ENCODE measurements at regions of chr3 and their contacts with region 1.

Region 1: GRCh38 chr3:45688882-45689756 is at the start of gene SACM1L:
- DNase-seq: peak; percentile 99
- ATAC-seq: peak; percentile 85
- H3K4me3 ChIP-seq: peak within 1 kb of the TSS; percentile 69 to 96 (median 82)
- H3K4me3 Mint-ChIP-seq: peak within 1 kb of the TSS; percentile 93
- H3K27ac ChIP-seq: peak within 1 kb of the TSS; percentile 75 to 85
- H3K27ac Mint-ChIP-seq: peak within 1 kb of the TSS; percentile 99
- H3K4me1 ChIP-seq: peaks cover 38 to 44% of the 10 kb centered on the region in 2 donors
- H3K4me1 Mint-ChIP-seq: peaks cover 55% of the 10 kb centered on the region
- H3K27me3 ChIP-seq: no peaks in the 10 kb centered on the region
- H3K27me3 Mint-ChIP-seq: peaks cover 3% of the 10 kb centered on the region
- CTCF ChIP-seq: no peak
- total RNA-seq, gene SACM1L: 85.7 and 88.2 TPM in 2 replicates

Region 2: DNA sequence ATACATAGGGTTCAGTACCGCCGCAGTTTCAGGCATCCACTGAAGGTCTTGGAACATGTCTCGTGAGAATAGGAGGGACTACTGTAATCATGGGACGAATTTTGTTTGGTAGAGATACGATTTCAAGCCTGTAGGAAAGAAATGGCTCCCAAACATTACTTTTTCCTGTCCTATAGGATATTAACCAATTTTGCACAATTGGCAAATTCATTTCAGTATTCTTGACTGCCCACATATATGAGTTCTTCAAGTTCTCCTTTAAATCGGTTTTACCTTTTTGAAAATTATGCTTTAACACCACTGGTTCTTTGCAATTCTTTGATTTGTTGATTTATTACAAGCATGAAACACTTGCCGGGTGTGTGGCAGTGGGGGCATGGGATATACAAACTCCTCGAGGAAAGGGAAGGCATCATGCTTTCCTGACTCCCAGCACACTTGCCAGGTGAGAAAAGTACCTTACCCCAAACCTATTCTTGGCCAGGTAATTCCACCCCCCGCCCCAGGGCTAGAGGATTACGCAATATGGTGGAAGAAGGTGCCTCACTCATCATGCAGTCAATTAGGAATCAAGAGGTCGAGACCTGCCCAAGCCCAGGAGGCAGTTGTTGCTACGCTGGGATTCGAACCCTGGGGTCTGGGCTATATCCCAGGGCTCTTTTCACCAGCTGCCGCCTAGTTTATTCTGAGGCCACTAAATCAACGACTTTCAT is 301.3 kb before region 1 on chr3:
- CTCF ChIA-PET with region 1: no interaction called
- POLR2A ChIA-PET with region 1: no interaction called
- intact Hi-C with region 1: loop called (anchors 1 kb)
- DNase-seq: peak; percentile 8
- ATAC-seq: peak; percentile 4
- H3K4me3 ChIP-seq: peak overlapping the region; percentile 26 to 97 (median 88)
- H3K4me3 Mint-ChIP-seq: peak overlapping the region; percentile 98
- H3K27ac ChIP-seq: peak overlapping the region in 1 of 2 donors; percentile 68
- H3K27ac Mint-ChIP-seq: peak overlapping the region; percentile 96
- H3K4me1 ChIP-seq: peaks cover 13 to 15% of the 10 kb centered on the region in 2 donors
- H3K4me1 Mint-ChIP-seq: peaks cover 19% of the 10 kb centered on the region
- H3K27me3 ChIP-seq: no peaks in the 10 kb centered on the region
- H3K27me3 Mint-ChIP-seq: peaks cover 20% of the 10 kb centered on the region
- CTCF ChIP-seq: no peak

Region 3: DNA sequence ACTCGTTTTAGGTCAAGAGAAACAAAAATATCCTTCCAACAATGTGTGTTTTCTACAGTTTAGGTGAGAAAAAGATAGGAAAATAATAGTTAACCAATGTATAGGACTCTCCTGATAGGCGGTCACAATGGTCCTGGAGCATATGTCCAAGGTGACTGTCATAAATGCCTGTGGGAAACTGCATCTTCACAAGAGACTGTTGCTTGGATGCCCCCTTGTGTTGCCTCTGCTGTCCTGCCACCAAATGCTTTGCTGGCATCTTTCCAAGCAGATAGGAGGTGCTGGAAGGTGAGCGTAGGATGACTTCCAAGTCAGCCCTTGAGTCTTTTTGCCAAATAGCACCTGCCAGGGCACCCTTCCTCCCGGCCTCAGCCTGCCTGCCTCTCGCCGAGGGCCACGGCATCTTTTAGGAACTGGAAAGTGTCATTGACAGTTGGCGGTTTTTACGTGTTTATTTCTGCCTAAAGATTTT is 24.0 kb before region 1 on chr3:
- CTCF ChIA-PET with region 1: interaction called, 10 read pairs
- POLR2A ChIA-PET with region 1: no interaction called
- intact Hi-C with region 1: loop called (anchors 2 kb)
- DNase-seq: peak; percentile 52
- ATAC-seq: peak; percentile 34
- H3K4me3 ChIP-seq: peak overlapping the region in 3 of 5 experiments; percentile 20 to 47 (median 26)
- H3K4me3 Mint-ChIP-seq: peak overlapping the region; percentile 68
- H3K27ac ChIP-seq: peak overlapping the region; percentile 36 to 72
- H3K27ac Mint-ChIP-seq: peak overlapping the region; percentile 66
- H3K4me1 ChIP-seq: peaks cover 12 to 18% of the 10 kb centered on the region in 2 donors
- H3K4me1 Mint-ChIP-seq: peaks cover 24% of the 10 kb centered on the region
- H3K27me3 ChIP-seq: no peaks in the 10 kb centered on the region
- H3K27me3 Mint-ChIP-seq: no peaks in the 10 kb centered on the region
- CTCF ChIP-seq: peak; percentile 33

Region 4: DNA sequence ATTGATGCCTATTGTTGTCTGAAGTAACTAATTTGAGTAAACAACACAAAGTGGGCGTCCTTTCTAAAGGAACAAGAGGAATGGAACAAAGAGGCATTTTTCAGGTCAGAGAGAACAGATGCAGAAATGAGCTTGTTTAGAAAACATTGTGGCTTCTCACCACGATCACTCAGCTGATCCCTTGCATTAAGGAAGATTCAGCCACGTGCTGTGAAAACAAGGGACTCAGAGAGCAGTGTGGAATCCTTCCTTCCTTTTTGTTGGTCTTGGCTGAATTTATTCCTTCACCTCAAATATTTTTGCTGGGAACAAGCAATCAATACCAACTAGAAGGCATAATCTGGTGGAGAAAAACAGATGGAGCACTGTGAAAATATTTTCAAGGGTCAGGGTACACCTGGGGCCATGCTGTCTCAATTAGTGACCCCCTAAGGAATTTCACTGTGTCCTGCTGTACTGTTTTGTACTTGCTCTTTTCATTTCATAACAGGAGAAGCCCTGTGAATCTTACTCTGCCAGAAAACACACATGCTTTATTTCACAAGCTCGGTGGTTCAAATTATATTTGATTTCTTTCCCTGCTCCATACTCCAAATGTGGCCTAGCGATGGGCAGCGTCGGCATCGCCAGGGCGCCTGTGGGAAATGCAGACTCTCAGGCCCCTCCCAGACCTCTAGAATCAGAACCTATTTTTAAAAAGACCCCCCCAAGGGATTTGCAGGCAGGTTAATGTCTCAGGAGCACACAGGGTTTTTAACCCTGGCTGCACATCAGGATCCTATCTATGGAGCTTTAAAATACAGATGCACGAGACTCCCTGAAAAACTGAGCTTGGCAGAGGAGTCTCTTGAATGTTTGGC is 118.8 kb after region 1 on chr3:
- CTCF ChIA-PET with region 1: no interaction called
- POLR2A ChIA-PET with region 1: no interaction called
- intact Hi-C with region 1: no loop called
- DNase-seq: no peak
- ATAC-seq: no peak
- H3K4me3 ChIP-seq: no peak overlapping the region
- H3K4me3 Mint-ChIP-seq: no peak overlapping the region
- H3K27ac ChIP-seq: no peak overlapping the region
- H3K27ac Mint-ChIP-seq: no peak overlapping the region
- H3K4me1 ChIP-seq: no peaks in the 10 kb centered on the region
- H3K4me1 Mint-ChIP-seq: no peaks in the 10 kb centered on the region
- H3K27me3 ChIP-seq: no peaks in the 10 kb centered on the region
- H3K27me3 Mint-ChIP-seq: no peaks in the 10 kb centered on the region
- CTCF ChIP-seq: no peak

Region 5: DNA sequence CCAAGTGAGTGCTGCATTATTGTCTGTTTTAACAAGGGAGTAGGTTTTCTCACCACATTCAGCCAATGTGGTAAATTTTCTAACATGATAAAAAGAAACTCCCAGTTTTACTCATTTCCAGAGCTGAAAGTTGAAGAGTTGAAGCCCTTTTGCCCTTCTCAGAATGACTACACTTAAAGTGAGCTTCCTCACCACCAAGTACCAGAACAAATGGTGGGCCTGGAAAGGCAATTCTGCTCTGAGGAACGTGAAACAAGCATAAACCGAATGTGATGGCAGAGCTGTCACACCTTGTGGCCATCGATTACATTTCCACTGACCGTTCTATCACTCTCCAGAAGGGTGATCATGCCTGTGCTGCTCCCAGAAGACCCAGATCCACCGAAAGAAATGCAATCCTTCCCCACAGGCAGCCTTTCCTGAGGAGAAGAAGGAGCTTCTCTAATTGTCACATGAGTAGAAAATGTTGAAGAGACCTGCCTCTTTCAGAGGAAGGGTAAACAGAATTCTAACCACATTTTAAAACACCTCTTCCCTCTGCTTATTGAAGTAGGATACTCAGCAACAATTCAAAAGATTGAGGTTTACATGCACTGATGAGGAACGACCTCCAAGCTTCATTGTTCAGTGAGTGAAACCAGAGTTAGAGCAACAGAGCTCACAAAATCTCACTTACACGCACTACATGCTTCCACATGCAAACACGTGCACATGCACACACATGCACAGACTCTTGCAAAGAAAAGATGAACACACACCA is 175.8 kb after region 1 on chr3:
- CTCF ChIA-PET with region 1: no interaction called
- POLR2A ChIA-PET with region 1: no interaction called
- intact Hi-C with region 1: no loop called
- DNase-seq: no peak
- ATAC-seq: no peak
- H3K4me3 ChIP-seq: no peak overlapping the region
- H3K4me3 Mint-ChIP-seq: peak overlapping the region; percentile 52
- H3K27ac ChIP-seq: peak overlapping the region in 1 of 2 donors; percentile 14
- H3K27ac Mint-ChIP-seq: peak overlapping the region; percentile 57
- H3K4me1 ChIP-seq: peaks cover 19 to 29% of the 10 kb centered on the region in 2 donors
- H3K4me1 Mint-ChIP-seq: peaks cover 36% of the 10 kb centered on the region
- H3K27me3 ChIP-seq: no peaks in the 10 kb centered on the region
- H3K27me3 Mint-ChIP-seq: peaks cover 8% of the 10 kb centered on the region
- CTCF ChIP-seq: no peak